Activated B cell treated with CpG ODN at 0.5 μM for 24 hours (primary cell): ENCODE measurements at regions of chr6 and their contacts with region 1.

Region 1: DNA sequence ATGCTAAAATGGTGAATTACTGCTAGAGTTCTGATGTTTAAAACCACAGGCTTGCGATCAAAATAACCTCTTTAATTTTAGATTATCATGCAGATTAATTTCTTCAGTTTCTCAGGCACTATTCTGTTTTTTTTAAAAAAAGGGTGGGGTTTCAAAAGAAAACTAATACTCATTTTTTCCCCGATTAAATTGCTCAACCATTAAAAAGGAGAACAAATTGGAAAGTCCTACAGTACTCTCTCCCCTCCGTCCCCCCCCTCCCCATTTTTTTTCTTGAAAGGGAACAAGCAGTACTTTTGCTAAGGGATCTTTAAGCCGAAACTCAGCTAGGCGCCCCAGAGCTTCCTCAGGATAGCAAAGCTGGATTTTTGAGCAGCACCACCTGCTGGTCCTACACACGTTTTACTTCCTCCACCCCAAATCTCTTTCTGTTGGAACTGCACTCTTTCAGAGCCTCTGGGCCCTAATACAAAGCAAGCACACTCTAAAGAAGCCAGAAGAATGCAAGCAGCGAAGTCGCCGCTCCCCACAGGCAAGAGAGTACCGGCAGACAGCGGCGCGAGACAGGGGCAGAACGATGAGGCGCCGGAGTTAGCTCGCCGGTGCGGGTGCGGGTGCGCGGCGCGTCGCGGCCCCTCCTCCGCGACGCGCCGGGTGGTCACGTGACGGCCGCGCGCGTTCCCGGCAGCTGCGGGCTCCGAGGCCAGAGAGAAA is at the start of gene RNF146:
- DNase-seq: no peak
- ATAC-seq: peak; percentile 73
- H3K4me3 Mint-ChIP-seq: peak within 1 kb of the TSS; percentile 93
- H3K27ac Mint-ChIP-seq: peak within 1 kb of the TSS; percentile 98
- H3K4me1 Mint-ChIP-seq: peaks cover 38% of the 10 kb centered on the region
- H3K27me3 Mint-ChIP-seq: no peaks in the 10 kb centered on the region
- CTCF ChIP-seq: no peak
- total RNA-seq, gene RNF146: 32.9 and 35.3 TPM in 2 replicates

Region 2: GRCh38 chr6:125301435-125302391 is 1964.6 kb before region 1 on chr6 and contains the start of gene HDDC2:
- CTCF ChIA-PET with region 1: no interaction called
- POLR2A ChIA-PET with region 1: no interaction called
- intact Hi-C with region 1: loop called (anchors 5 kb)
- DNase-seq: peak; percentile 53
- ATAC-seq: peak; percentile 78
- H3K4me3 Mint-ChIP-seq: peak within 1 kb of the TSS; percentile 89
- H3K27ac Mint-ChIP-seq: peak within 1 kb of the TSS; percentile 78
- H3K4me1 Mint-ChIP-seq: peaks cover 38% of the 10 kb centered on the region
- H3K27me3 Mint-ChIP-seq: peaks cover 14% of the 10 kb centered on the region
- CTCF ChIP-seq: no peak
- total RNA-seq, gene HDDC2: 53.1 and 55.8 TPM in 2 replicates

Region 3: GRCh38 chr6:125779924-125780539 is 1486.3 kb before region 1 on chr6:
- CTCF ChIA-PET with region 1: no interaction called
- POLR2A ChIA-PET with region 1: interaction called, 6 read pairs
- intact Hi-C with region 1: loop called (anchors 2 kb)
- DNase-seq: peak; percentile 77
- ATAC-seq: peak; percentile 79
- H3K4me3 Mint-ChIP-seq: no peak overlapping the region
- H3K27ac Mint-ChIP-seq: no peak overlapping the region
- H3K4me1 Mint-ChIP-seq: peaks cover 4% of the 10 kb centered on the region
- H3K27me3 Mint-ChIP-seq: no peaks in the 10 kb centered on the region
- CTCF ChIP-seq: no peak

Region 4: DNA sequence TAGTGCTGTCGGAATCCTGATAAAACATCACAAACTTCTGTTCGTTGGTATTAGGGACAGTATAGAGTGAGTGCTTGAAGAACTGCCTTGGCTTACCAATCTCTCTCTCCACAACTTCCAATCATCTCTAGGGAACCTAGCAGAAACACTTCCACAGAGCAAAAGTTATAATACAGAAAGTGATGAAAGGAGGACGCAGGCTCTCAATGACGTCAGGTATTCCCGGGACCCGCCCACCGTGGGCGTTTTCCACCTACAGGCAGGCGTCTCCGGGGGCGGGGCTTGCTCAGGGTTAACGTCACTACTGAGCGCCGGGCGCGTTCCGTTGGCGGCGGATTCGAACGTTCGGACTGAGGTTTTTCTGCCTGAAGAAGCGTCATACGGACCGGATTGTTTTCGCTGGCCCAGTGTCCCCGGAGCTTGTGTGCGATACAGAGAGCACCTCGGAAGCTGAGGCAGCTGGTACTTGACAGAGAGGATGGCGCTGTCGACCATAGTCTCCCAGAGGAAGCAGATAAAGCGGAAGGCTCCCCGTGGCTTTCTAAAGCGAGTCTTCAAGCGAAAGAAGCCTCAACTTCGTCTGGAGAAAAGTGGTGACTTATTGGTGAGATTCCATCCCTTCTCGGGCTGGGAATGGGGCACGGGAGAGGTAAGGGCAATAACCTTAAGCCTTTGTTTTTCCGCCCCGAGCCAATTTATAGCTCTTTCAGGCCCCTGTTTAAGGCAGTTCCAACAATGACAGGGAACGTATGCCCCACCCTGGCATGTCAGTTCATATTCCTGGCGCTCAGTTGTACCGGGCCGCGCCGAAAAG is 926.3 kb before region 1 on chr6 and contains the start of gene CENPW:
- CTCF ChIA-PET with region 1: no interaction called
- POLR2A ChIA-PET with region 1: no interaction called
- intact Hi-C with region 1: loop called (anchors 2 kb)
- DNase-seq: peak; percentile 77
- ATAC-seq: peak; percentile 94
- H3K4me3 Mint-ChIP-seq: no peak within 1 kb of the TSS
- H3K27ac Mint-ChIP-seq: no peak within 1 kb of the TSS
- H3K4me1 Mint-ChIP-seq: peaks cover 11% of the 10 kb centered on the region
- H3K27me3 Mint-ChIP-seq: no peaks in the 10 kb centered on the region
- CTCF ChIP-seq: no peak
- total RNA-seq, gene CENPW: 4.4 and 5.2 TPM in 2 replicates

Region 5: GRCh38 chr6:126574301-126574700 is 692.0 kb before region 1 on chr6:
- CTCF ChIA-PET with region 1: no interaction called
- POLR2A ChIA-PET with region 1: no interaction called
- intact Hi-C with region 1: no loop called
- DNase-seq: no peak
- ATAC-seq: no peak
- H3K4me3 Mint-ChIP-seq: no peak overlapping the region
- H3K27ac Mint-ChIP-seq: no peak overlapping the region
- H3K4me1 Mint-ChIP-seq: no peaks in the 10 kb centered on the region
- H3K27me3 Mint-ChIP-seq: no peaks in the 10 kb centered on the region
- CTCF ChIP-seq: no peak

Region 6: DNA sequence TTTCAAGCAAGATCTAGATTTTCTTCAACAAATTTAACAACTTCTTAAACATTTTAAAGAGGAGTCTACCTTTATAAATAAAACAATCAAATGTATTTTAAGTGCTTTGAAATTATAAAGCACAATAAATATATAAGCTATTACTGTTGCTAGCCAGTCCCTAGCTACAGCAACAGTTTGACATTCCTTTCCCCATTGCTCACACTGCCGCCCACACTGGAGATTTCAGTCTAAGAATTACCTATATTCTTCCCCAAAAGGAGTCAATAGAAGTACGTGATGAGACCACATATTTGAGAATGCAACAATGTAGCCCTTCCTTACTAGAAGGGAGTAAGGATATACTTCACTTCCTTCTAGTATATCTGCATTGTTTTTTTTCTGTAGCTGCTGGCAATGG is 65.0 kb before region 1 on chr6:
- CTCF ChIA-PET with region 1: no interaction called
- POLR2A ChIA-PET with region 1: no interaction called
- intact Hi-C with region 1: no loop called
- DNase-seq: no peak
- ATAC-seq: no peak
- H3K4me3 Mint-ChIP-seq: no peak overlapping the region
- H3K27ac Mint-ChIP-seq: no peak overlapping the region
- H3K4me1 Mint-ChIP-seq: no peaks in the 10 kb centered on the region
- H3K27me3 Mint-ChIP-seq: peaks cover 5% of the 10 kb centered on the region
- CTCF ChIP-seq: no peak

Region 7: DNA sequence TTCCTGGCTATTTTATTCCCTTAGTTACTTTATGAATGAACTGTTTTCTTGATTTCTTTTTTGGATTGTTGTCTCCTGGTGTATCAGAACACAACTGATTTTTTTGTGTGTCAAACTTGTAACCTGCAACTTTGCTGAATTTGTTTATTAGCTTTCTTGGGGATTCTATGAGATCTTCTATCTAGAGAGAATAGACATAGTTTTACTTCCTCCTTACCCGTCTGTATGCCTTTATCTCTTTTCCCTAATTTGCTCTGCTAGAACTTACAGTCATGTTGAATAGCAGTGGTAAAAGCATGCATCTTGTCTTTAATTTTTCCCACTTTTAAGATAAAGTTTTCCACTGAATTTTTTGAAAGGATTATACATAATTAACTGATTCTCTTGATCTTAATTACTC is 13.5 kb after region 1 on chr6:
- CTCF ChIA-PET with region 1: interaction called, 12 read pairs
- POLR2A ChIA-PET with region 1: interaction called, 6 read pairs
- intact Hi-C with region 1: no loop called
- DNase-seq: no peak
- ATAC-seq: no peak
- H3K4me3 Mint-ChIP-seq: no peak overlapping the region
- H3K27ac Mint-ChIP-seq: no peak overlapping the region
- H3K4me1 Mint-ChIP-seq: peaks cover 10% of the 10 kb centered on the region
- H3K27me3 Mint-ChIP-seq: no peaks in the 10 kb centered on the region
- CTCF ChIP-seq: no peak

Region 8: DNA sequence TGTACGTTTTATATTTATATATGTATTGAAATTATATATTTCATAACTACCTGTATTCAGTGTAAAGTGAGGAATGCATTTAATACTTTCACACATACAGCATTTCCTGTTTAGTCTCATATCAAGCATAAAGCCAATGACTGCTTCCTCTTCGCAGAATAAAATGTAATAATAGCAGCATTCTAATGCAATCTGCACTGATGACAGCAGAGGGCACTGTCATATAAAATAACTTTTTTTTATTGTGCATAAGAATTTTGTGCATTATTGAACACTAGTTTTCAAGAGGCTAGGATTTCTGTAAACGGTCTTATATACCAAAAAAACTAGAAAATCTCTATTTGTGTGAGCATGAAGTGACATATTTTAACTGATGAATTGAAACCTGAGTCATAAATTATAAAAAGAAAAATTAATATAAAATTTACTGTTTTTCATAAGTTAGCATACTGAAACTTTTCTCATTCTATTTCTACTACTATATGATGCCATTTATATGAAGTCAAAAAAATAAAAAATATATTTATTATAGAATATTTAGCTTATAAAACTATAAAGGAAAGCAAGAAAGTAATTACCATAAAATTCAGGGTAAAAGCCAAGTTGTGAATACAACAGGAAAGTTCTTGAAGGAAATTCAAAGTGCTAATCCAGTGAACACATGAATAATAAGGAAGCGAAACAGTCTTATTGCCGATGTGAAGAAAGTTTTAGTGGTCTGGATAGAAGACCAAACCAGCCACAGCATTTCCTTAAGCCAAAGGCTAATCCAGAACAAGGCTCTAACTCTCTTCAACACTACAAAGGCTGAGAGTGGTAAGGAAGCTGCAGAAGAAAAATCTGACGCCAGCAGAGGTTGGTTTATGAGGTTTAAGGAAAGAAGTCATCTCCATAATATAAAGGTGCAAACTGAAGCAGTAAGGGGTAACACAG is 36.7 kb after region 1 on chr6:
- CTCF ChIA-PET with region 1: interaction called, 3 read pairs
- POLR2A ChIA-PET with region 1: interaction called, 5 read pairs
- intact Hi-C with region 1: loop called (anchors 5 kb)
- DNase-seq: no peak
- ATAC-seq: peak; percentile 94
- H3K4me3 Mint-ChIP-seq: no peak overlapping the region
- H3K27ac Mint-ChIP-seq: peak overlapping the region; percentile 24
- H3K4me1 Mint-ChIP-seq: peaks cover 24% of the 10 kb centered on the region
- H3K27me3 Mint-ChIP-seq: no peaks in the 10 kb centered on the region
- CTCF ChIP-seq: peak; percentile 40

Region 9: GRCh38 chr6:127516666-127517273 is 250.4 kb after region 1 on chr6:
- CTCF ChIA-PET with region 1: interaction called, 3 read pairs
- POLR2A ChIA-PET with region 1: interaction called, 3 read pairs
- intact Hi-C with region 1: loop called (anchors 2 kb)
- DNase-seq: no peak
- ATAC-seq: peak; percentile 41
- H3K4me3 Mint-ChIP-seq: peak overlapping the region; percentile 86
- H3K27ac Mint-ChIP-seq: peak overlapping the region; percentile 35
- H3K4me1 Mint-ChIP-seq: peaks cover 28% of the 10 kb centered on the region
- H3K27me3 Mint-ChIP-seq: peaks cover 46% of the 10 kb centered on the region
- CTCF ChIP-seq: no peak